Caco-2 (cell line): ENCODE measurements at regions of chr5 and their contacts with region 1.

Region 1: DNA sequence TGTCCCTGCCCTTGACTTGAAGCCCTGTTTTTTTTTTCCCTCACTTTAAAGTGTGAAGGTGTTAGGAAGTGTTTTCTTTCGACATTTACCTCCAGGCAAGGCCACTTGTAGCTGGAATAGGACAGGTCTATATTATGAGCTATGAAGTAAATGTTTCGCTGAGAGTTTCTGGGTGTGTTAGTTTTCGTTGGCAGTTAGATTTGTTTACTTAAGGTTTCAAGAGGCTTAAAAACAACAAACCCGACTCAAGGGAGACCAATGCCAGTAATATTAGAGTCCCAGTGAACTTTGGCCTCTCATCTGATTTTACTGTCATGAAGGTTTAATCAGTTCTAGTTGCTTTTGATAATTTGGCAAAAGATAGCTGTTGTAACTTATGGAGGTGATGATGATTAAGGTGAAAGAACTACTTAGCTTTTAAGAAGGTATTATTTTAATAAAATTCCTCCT is 25.2 kb downstream of the OCLN start:
- DNase-seq: peak in 1 of 2 experiments; percentile 53
- H3K4me3 ChIP-seq: no peak overlapping the region
- H3K4me3 Mint-ChIP-seq: peak overlapping the region; percentile 35
- H3K27ac Mint-ChIP-seq: peak overlapping the region; percentile 74
- H3K4me1 ChIP-seq: peaks cover 64% of the 10 kb centered on the region
- H3K4me1 Mint-ChIP-seq: peaks cover 21% of the 10 kb centered on the region
- H3K27me3 ChIP-seq: no peaks in the 10 kb centered on the region
- H3K27me3 Mint-ChIP-seq: no peaks in the 10 kb centered on the region
- CTCF ChIP-seq: no peak

Region 2: GRCh38 chr5:69467442-69468225 is 50.2 kb before region 1 on chr5:
- CTCF ChIA-PET with region 1: no interaction called
- POLR2A ChIA-PET with region 1: no interaction called
- intact Hi-C with region 1: no loop called
- DNase-seq: no peak
- H3K4me3 ChIP-seq: no peak overlapping the region
- H3K4me3 Mint-ChIP-seq: no peak overlapping the region
- H3K27ac Mint-ChIP-seq: no peak overlapping the region
- H3K4me1 ChIP-seq: no peaks in the 10 kb centered on the region
- H3K4me1 Mint-ChIP-seq: no peaks in the 10 kb centered on the region
- H3K27me3 ChIP-seq: no peaks in the 10 kb centered on the region
- H3K27me3 Mint-ChIP-seq: no peaks in the 10 kb centered on the region
- CTCF ChIP-seq: no peak

Region 3: GRCh38 chr5:69502767-69503488 is 14.9 kb before region 1 on chr5:
- CTCF ChIA-PET with region 1: no interaction called
- POLR2A ChIA-PET with region 1: no interaction called
- intact Hi-C with region 1: loop called (anchors 2 kb)
- DNase-seq: no peak
- H3K4me3 ChIP-seq: no peak overlapping the region
- H3K4me3 Mint-ChIP-seq: peak overlapping the region; percentile 9
- H3K27ac Mint-ChIP-seq: peak overlapping the region; percentile 55
- H3K4me1 ChIP-seq: peaks cover 53% of the 10 kb centered on the region
- H3K4me1 Mint-ChIP-seq: peaks cover 18% of the 10 kb centered on the region
- H3K27me3 ChIP-seq: no peaks in the 10 kb centered on the region
- H3K27me3 Mint-ChIP-seq: no peaks in the 10 kb centered on the region
- CTCF ChIP-seq: no peak

Region 4: GRCh38 chr5:69528048-69528447 is 10.3 kb after region 1 on chr5:
- CTCF ChIA-PET with region 1: no interaction called
- POLR2A ChIA-PET with region 1: no interaction called
- intact Hi-C with region 1: loop called (anchors 1 kb)
- DNase-seq: peak; percentile 63 to 67
- H3K4me3 ChIP-seq: no peak overlapping the region
- H3K4me3 Mint-ChIP-seq: peak overlapping the region; percentile 5
- H3K27ac Mint-ChIP-seq: peak overlapping the region; percentile 39
- H3K4me1 ChIP-seq: peaks cover 63% of the 10 kb centered on the region
- H3K4me1 Mint-ChIP-seq: peaks cover 44% of the 10 kb centered on the region
- H3K27me3 ChIP-seq: no peaks in the 10 kb centered on the region
- H3K27me3 Mint-ChIP-seq: no peaks in the 10 kb centered on the region
- CTCF ChIP-seq: no peak